ENCODE measurements at regions of chr1 and their contacts with region 1.

Region 1: DNA sequence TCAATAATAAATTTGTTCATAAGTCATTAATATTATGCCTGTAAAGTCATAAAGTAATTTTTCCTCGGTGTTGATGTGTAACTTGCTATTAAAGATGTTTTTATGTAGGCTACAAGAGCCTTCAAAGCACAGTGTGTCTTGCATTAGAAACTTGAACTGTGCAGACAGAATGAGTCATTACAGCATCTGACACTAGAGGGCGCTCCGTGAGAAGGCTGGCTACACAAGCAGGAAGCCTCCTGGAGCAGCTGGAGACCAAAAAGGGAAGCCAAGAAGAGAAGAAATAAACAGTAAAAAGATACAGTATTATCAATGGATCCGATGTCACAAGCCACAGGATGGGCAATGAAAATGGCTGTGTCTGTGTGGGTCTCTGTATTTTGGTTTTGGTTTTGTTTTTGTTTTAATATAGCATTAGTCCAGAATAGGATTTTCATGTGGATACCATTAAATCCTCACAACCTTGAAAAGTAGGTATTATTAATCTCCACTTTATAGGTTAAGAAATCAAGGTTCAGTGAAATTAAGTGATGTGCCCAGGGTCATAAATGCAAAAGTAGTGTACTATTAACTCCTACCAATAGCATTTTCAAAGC is 16.1 kb upstream of the LRRC8D start:
- DNase-seq: peak; percentile 93

Region 2: GRCh38 chr1:89524369-89525168 is 280.2 kb before region 1 on chr1 and contains the start of gene LRRC8B:
- intact Hi-C with region 1: no loop called
- DNase-seq: peak; percentile 98
- total RNA-seq, gene LRRC8B: 4.5 TPM

Region 3: GRCh38 chr1:89771991-89772560 is 32.7 kb before region 1 on chr1:
- intact Hi-C with region 1: no loop called
- DNase-seq: no peak

Region 4: DNA sequence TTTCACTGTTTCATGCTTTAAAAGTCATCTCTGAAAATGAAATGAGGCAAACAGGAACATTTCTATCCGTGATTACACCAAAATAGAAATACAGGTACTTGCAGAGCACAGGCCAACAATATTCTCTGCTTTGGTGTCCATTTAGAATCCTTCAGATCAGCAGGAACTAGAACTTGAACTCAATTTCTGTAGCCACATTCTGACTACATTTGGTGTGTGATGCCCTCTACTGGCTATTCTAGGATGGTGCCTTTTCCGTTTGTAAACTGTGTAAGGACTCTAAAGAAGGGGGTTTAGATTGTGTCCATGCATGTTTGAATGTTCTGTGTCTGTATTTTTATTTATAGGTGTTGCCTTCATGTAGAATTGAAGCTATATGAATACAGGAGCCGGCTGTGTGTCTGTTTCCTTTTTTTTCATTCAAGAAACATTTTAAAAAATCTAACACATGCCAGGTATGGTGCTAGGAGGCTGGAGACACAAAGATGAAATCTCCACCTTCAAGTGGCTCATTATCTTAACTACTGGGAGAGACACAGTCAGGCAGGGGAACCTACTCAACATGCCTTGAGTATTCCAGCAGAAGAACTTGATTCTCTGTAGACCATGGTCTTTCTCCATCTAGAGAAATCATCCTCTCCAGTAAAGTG is 182.6 kb after region 1 on chr1:
- intact Hi-C with region 1: loop called (anchors 1 kb)
- DNase-seq: no peak

Measured in cardiac septum (tissue), 1 donor.